ENCODE measurements at regions of chr7 and their contacts with region 1.

Region 1: DNA sequence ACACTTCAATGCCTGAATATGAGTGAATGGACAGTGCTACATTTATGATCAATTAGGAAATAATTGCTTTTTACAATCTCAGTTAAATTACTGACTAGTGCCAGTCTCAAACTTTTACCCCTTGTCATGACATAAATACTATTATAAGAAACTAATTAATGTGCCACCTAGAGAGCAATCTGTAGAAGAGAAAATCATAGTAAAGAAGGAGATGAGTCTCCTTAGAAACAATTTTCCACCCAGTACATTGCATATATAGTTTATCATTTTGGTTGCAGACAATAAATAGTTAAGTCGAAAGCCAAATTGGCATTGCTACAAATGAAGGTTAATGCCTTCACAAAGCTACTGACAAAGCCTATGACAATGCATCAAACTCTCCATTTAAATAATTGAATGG is 68.6 kb downstream of the SLC13A1 start:
- DNase-seq: no peak
- ATAC-seq: peak; percentile 31; the same call in 1 of the 3 replicates
- H3K4me3 ChIP-seq: no peak overlapping the region
- H3K27ac ChIP-seq: no peak overlapping the region
- H3K4me1 ChIP-seq: no peaks in the 10 kb centered on the region
- H3K27me3 ChIP-seq: no peaks in the 10 kb centered on the region
- CTCF ChIP-seq: no peak; a peak in 1 of 6 replicates
- EP300 ChIP-seq: no peak
- POLR2A ChIP-seq: no peak
- RAD21 ChIP-seq: no peak

Region 2: DNA sequence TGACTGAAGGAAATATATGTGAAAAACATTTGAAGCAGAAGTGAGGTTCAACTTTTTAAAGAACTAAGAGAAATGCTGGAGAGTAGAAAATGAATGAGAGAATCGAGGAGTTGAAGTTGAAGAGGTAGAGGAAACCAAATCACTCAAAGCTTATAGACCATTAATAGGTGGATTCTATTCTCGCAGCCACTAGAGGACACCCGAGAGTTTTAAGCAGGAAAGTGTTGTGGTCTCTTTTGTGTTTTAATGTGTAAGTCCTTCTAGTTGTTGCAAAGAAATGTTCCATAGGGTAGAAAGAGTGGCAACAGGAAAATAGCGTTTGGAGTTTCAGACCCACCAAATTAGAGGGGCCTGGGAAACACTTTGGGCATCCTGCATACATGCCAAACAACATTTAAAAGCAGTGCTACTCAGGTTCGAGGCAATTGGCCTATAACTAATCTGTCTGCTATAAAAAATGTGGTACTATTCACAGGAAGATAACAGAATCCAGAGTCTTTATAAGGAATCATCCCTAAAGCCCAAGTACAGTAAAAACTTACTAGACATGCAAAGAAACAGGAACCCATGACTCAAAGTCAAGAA is 60.3 kb before region 1 on chr7:
- CTCF ChIA-PET with region 1: interaction called, 10 read pairs
- POLR2A ChIA-PET with region 1: no interaction called
- RAD21 ChIA-PET with region 1: interaction called, 4 read pairs
- SMC1A ChIA-PET with region 1: no interaction called
- in situ Hi-C with region 1: no loop called
- intact Hi-C with region 1: no loop called
- DNase-seq: no peak
- ATAC-seq: peak; percentile 81
- H3K4me3 ChIP-seq: no peak overlapping the region
- H3K27ac ChIP-seq: no peak overlapping the region
- H3K4me1 ChIP-seq: no peaks in the 10 kb centered on the region
- H3K27me3 ChIP-seq: no peaks in the 10 kb centered on the region
- CTCF ChIP-seq: peak; percentile 61 to 74 (median 71)
- EP300 ChIP-seq: no peak
- POLR2A ChIP-seq: no peak
- RAD21 ChIP-seq: peak; percentile 80

Region 3: DNA sequence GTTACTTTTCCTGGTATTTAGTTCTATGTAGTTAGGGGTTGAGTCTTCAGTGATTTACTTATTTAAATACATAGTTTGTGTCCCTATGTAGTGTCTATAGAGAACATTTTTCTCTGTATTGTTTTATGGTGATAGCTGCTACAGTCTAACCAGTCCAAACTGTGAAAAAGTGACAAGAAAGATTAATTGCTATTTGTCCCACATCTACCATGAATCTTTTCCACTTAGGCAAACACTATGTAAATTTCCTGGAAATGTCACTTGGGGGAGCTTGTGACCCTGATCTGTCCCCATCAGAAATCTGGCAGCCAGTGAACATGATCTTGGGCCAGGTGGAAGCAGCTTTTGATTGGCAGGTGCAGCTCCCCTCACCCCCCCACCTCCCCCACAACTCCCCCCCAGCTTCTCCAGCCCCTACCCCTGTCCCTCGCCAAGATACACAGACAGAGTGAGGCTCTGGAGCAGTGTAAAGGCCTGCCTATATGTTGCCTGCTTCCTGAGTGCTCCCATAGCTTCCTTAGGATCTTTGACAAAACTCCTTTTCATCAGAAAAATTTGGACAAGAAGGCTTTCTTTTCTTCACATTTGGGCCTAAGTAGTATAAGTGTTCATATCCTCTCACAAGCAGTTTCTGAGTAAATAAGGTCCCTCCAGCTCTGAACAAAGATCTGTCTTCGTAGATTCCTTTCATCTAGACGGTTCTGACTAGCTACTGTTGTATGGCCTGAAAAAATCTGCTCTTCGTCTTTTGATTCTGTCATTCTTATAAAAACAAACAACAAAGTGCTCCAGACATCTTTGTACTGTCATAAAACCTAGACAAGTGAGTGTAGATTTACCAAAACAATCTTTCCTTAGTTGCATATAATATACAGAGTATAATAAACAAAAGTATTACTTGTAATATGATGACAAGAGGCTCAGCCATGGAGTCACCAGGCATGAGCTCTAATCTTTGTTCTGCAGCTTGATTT is 100.2 kb after region 1 on chr7:
- CTCF ChIA-PET with region 1: no interaction called
- POLR2A ChIA-PET with region 1: no interaction called
- RAD21 ChIA-PET with region 1: no interaction called
- SMC1A ChIA-PET with region 1: no interaction called
- in situ Hi-C with region 1: no loop called
- intact Hi-C with region 1: no loop called
- DNase-seq: no peak
- ATAC-seq: no peak
- H3K4me3 ChIP-seq: no peak overlapping the region
- H3K27ac ChIP-seq: no peak overlapping the region
- H3K4me1 ChIP-seq: no peaks in the 10 kb centered on the region
- H3K27me3 ChIP-seq: no peaks in the 10 kb centered on the region; a peak in 1 of 4 replicates
- CTCF ChIP-seq: no peak
- EP300 ChIP-seq: no peak
- POLR2A ChIP-seq: no peak
- RAD21 ChIP-seq: no peak